ENCODE measurements at regions of chr12 and their contacts with region 1.

Region 1: DNA sequence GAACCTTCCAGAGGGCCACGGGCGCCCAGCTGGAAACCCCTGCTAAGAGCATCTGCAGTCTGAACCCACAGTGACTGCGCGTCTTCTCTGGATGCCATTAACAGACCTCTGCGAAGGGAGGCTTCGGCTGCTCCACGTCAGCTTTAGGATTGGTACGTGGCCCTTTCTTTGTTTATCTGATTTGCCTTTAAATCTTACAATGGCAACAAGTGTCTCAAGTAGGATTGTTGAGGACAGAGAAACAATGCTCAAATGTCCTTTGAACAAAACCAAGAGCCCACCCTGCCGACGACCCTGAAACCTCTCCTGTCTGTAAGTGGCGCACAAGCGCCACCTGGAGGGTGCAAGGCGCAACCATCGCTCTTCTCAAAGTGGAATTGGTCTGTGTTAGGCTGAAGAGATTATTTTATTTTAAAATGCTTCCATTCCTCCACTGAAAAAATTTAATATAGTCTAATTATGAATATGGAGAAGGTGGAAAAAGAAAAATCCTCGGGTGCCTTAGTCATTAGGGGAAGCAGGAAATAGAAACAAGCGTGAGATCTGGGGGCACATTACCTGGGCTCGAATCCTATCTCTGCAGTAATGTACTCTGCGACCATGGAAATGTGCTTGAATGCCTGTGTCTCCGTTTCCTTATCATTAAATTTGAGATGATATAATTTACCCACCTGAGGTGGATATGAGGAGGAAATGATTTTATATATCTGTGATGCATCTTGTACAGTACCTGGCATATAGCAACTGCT is 82.6 kb upstream of the PTPRB start:
- DNase-seq: peak; percentile 41
- H3K4me3 Mint-ChIP-seq: no peak overlapping the region
- H3K27ac Mint-ChIP-seq: no peak overlapping the region
- H3K4me1 Mint-ChIP-seq: no peaks in the 10 kb centered on the region
- H3K27me3 Mint-ChIP-seq: no peaks in the 10 kb centered on the region
- CTCF ChIP-seq: peak; percentile 88

Region 2: DNA sequence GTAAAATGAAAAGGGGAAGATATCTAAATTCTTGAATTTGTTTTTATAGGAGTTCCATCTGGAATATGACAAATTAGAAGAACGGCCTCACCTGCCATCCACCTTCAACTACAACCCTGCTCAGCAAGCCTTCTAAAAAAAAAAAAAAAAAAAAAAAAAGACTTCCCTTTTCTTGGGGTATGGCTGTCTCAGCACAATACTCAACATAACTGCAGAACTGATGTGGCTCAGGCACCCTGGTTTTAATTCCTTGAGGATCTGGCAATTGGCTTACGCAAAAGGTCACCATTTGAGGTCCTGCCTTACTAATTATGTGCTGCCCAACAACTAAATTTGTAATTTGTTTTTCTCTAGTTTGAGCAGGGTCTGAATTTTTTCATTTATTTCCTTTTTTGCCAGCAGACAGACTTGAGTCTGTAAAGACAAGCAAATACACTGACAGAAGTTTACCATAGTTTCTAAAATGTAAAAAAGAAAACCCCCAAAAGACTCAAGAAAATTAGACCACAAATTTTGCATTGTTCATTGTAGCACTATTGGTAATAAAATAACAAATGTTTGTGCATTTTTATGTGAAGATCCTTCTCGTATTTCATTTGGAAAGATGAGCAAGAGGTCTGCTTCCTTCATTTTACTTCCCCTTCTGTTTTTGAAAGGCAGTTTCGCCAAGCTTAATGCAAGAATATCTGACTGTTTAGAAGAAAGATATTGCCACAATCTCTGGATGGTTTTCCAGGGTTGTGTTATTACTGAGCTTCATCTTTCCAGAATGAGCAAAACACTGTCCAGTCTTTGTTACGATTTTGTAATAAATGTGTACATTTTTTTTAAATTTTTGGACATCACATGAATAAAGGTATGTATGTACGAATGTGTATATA is 365.8 kb before region 1 on chr12:
- CTCF ChIA-PET with region 1: no interaction called
- intact Hi-C with region 1: loop called (anchors 10 kb)
- DNase-seq: no peak
- H3K4me3 Mint-ChIP-seq: no peak overlapping the region
- H3K27ac Mint-ChIP-seq: no peak overlapping the region
- H3K4me1 Mint-ChIP-seq: no peaks in the 10 kb centered on the region
- H3K27me3 Mint-ChIP-seq: no peaks in the 10 kb centered on the region
- CTCF ChIP-seq: no peak